A549 (cell line): ENCODE measurements at regions of chr14 and their contacts with region 1.

Region 1: GRCh38 chr14:70045844-70046535 is 142.8 kb downstream of the SLC8A3 start:
- DNase-seq: peak; percentile 71 to 82
- ATAC-seq: peak; percentile 87 to 95
- H3K4me3 ChIP-seq: no peak overlapping the region
- H3K27ac ChIP-seq: peak overlapping the region; percentile 89 to 90
- H3K4me1 ChIP-seq: peaks cover 39% of the 10 kb centered on the region
- CTCF ChIP-seq: peak; percentile 74
- EP300 ChIP-seq: no peak
- POLR2A ChIP-seq: no peak; the same call in 1 of the 2 replicates
- RAD21 ChIP-seq: peak; percentile 90

Region 2: GRCh38 chr14:69997849-69998248 is 48.1 kb before region 1 on chr14:
- CTCF ChIA-PET with region 1: interaction called, 11 read pairs
- POLR2A ChIA-PET with region 1: no interaction called
- DNase-seq: peak; percentile 40 to 87
- ATAC-seq: peak; percentile 70 to 71
- H3K4me3 ChIP-seq: no peak overlapping the region
- H3K27ac ChIP-seq: peak overlapping the region; percentile 90 to 98
- H3K4me1 ChIP-seq: peaks cover 60% of the 10 kb centered on the region
- CTCF ChIP-seq: no peak
- EP300 ChIP-seq: peak; percentile 94 to 97; a peak in 4 of 5 replicates
- POLR2A ChIP-seq: no peak
- RAD21 ChIP-seq: peak in 1 of 2 experiments; percentile 61; a peak in 2 of 5 replicates

Region 3: GRCh38 chr14:70061108-70061507 is 15.1 kb after region 1 on chr14:
- CTCF ChIA-PET with region 1: interaction called, 52 read pairs
- POLR2A ChIA-PET with region 1: no interaction called
- DNase-seq: no peak
- ATAC-seq: no peak
- H3K4me3 ChIP-seq: no peak overlapping the region
- H3K27ac ChIP-seq: peak overlapping the region in 1 of 2 experiments; percentile 3; a peak in 1 of 6 replicates
- H3K4me1 ChIP-seq: peaks cover 16% of the 10 kb centered on the region
- CTCF ChIP-seq: no peak
- EP300 ChIP-seq: no peak
- POLR2A ChIP-seq: no peak
- RAD21 ChIP-seq: no peak

Region 4: DNA sequence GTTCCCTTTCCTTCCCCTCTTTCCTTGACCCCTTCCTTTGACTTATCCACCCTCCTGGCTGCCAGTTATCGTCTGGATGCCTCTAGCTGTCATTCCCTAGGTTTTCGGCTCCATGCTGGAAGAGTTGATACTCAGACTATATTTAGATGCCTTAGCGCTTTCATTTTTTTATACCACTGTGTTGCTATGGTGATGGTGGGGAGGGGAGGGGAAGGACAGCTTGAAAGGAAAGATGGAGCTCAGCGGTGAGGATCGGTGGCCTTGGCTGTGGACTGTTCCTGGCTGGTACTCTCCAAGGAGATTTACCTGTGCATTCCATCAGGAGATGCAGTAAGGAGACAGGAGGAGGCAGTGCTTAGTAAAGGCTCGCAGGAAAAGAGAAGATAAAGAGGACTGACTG is 34.1 kb after region 1 on chr14:
- CTCF ChIA-PET with region 1: interaction called, 101 read pairs
- POLR2A ChIA-PET with region 1: no interaction called
- DNase-seq: no peak
- ATAC-seq: no peak
- H3K4me3 ChIP-seq: no peak overlapping the region
- H3K27ac ChIP-seq: no peak overlapping the region
- H3K4me1 ChIP-seq: no peaks in the 10 kb centered on the region
- CTCF ChIP-seq: no peak
- EP300 ChIP-seq: no peak
- POLR2A ChIP-seq: no peak
- RAD21 ChIP-seq: no peak